Sigmoid colon (tissue), 7 donors: ENCODE measurements at regions of chr6 and their contacts with region 1.

Region 1: GRCh38 chr6:85449818-85450759 is at the start of gene NT5E:
- DNase-seq: peak; percentile 87
- H3K4me3 ChIP-seq: peak within 1 kb of the TSS; percentile 68 to 82 (median 76)
- H3K27ac ChIP-seq: peak within 1 kb of the TSS; percentile 87 to 94 (median 89)
- H3K4me1 ChIP-seq: peaks cover 0 to 36% (median 27%) of the 10 kb centered on the region in 4 donors
- H3K27me3 ChIP-seq: no peaks in the 10 kb centered on the region
- CTCF ChIP-seq: no peak
- EP300 ChIP-seq: no peak
- POLR2A ChIP-seq: peak; percentile 9 to 50
- total RNA-seq, gene NT5E: 21.7 to 70.3 (median 33.1) TPM

Region 2: DNA sequence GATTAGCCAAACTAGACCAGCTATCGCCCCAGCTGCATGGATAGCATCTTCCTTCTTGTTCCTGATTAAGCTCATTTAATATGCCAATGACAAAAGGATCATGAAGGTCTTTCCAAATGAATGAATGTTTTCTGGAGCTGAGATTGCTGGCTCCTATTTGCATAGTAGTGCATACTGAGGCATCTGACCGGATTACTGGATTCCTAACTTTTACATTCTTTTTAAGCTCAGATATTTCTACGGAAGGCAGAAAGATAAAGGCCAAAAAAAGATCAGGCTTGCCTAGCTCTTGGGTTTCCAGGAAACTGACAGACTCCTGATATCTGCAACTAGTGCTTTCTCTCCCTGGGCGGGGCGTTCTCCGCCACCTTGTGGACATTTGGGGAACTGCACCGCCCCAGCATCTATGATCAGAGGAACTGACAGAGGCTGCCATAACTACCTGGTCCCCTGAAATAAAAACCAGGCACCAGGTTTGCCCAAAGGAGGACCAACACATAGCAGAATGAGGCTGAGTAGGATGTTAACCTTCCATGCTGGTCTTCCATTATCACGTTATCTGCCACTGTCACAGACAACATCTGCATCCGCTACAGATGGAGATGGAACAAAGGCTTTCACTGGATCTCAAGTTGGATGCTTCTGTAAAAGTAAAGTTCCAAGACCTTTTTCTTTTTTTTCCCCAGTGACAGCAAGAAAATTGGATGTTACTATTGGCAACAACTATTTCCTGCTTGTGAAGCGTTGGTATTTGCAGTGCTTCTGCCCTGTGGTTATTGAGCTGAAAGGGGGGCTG is 33.0 kb after region 1 on chr6:
- intact Hi-C with region 1: loop called (anchors 5 kb)
- DNase-seq: peak; percentile 89
- H3K4me3 ChIP-seq: no peak overlapping the region
- H3K27ac ChIP-seq: peak overlapping the region; percentile 16 to 68 (median 42)
- H3K4me1 ChIP-seq: peaks cover 0 to 11% (median 4%) of the 10 kb centered on the region in 4 donors
- H3K27me3 ChIP-seq: no peaks in the 10 kb centered on the region
- CTCF ChIP-seq: peak; percentile 83 to 100 (median 98)
- EP300 ChIP-seq: no peak
- POLR2A ChIP-seq: no peak

Region 3: DNA sequence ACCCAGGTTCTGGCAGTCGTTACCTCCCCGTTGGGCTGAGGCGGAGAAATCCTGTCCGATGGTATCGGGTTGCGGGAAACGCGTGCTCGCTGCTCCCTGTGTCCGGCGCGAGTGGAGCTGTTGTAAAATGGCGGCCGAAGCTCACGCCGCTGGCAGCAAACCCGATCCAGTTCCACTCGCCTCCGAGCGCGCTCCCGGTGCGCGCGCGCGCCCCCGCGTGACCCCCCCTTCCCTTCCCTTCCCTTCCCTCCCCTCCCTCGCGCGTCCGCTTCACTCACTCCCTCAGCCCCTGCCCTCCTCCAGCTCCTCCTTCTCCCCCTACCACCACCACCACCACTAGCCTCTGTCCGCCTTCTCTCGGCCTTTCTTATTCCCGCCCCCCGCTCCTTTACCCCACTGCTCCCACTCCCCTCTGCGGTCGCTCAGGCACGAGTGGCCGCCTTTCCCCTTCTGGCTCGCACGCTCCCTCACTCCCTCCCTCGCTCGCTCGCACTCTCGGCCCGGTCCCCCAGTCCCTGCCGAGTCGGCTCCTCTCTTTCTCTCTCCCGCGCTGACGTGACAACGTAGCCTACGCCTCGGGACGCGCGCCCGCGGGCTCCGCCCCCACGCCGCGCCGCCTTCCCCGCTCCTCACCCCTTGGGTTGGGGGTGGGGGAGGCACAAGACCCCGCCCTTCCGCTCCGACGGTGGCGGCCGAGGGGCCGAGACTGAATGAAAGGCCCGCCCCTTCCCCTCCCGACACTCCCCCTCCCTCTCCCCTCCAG is 192.9 kb after region 1 on chr6 and contains the start of gene SYNCRIP:
- intact Hi-C with region 1: no loop called
- DNase-seq: peak; percentile 100
- H3K4me3 ChIP-seq: peak within 1 kb of the TSS; percentile 80 to 99 (median 87)
- H3K27ac ChIP-seq: peak within 1 kb of the TSS; percentile 96 to 99 (median 98)
- H3K4me1 ChIP-seq: peaks cover 0 to 50% (median 39%) of the 10 kb centered on the region in 4 donors
- H3K27me3 ChIP-seq: no peaks in the 10 kb centered on the region
- CTCF ChIP-seq: no peak
- EP300 ChIP-seq: peak in 2 of 4 donors; percentile 38 to 60
- POLR2A ChIP-seq: peak; percentile 94 to 97
- total RNA-seq, gene SYNCRIP: 71.6 to 84.3 (median 77.5) TPM